ENCODE measurements at regions of chr1 and their contacts with region 1.

Region 1: GRCh38 chr1:1374929-1375662 is at the start of gene AURKAIP1:
- DNase-seq: peak; percentile 98
- ATAC-seq: peak; percentile 95
- total RNA-seq, gene AURKAIP1: 271 TPM

Region 2: GRCh38 chr1:1507305-1507704 is 132.2 kb after region 1 on chr1:
- intact Hi-C with region 1: loop called (anchors 10 kb)
- DNase-seq: no peak
- ATAC-seq: no peak

Measured in Right ventricle myocardium superior (tissue), 1 donor.